Naive thymus-derived CD4-positive, alpha-beta T cell (primary cell): ENCODE measurements at regions of chr12 and their contacts with region 1.

Region 1: GRCh38 chr12:14284184-14284722 is 81.2 kb upstream of the ATF7IP start:
- DNase-seq: no peak
- ATAC-seq: no peak
- H3K4me3 ChIP-seq: no peak overlapping the region
- H3K4me3 Mint-ChIP-seq: no peak overlapping the region
- H3K27ac ChIP-seq: no peak overlapping the region
- H3K27ac Mint-ChIP-seq: no peak overlapping the region
- H3K4me1 ChIP-seq: no peaks in the 10 kb centered on the region
- H3K4me1 Mint-ChIP-seq: peaks cover 0 to 8% (median 0%) of the 10 kb centered on the region in 7 donors
- H3K27me3 ChIP-seq: no peaks in the 10 kb centered on the region
- H3K27me3 Mint-ChIP-seq: no peaks in the 10 kb centered on the region

Region 2: GRCh38 chr12:13187399-13187798 is 1096.9 kb before region 1 on chr12:
- CTCF ChIA-PET with region 1: no interaction called
- POLR2A ChIA-PET with region 1: no interaction called
- intact Hi-C with region 1: no loop called
- DNase-seq: no peak
- ATAC-seq: no peak
- H3K4me3 ChIP-seq: no peak overlapping the region
- H3K4me3 Mint-ChIP-seq: no peak overlapping the region
- H3K27ac ChIP-seq: no peak overlapping the region
- H3K27ac Mint-ChIP-seq: peak overlapping the region in 1 of 9 donors; percentile 26
- H3K4me1 ChIP-seq: no peaks in the 10 kb centered on the region
- H3K4me1 Mint-ChIP-seq: peaks cover 0 to 27% (median 0%) of the 10 kb centered on the region in 7 donors
- H3K27me3 ChIP-seq: no peaks in the 10 kb centered on the region
- H3K27me3 Mint-ChIP-seq: peaks cover 0 to 39% (median 7%) of the 10 kb centered on the region in 5 donors

Region 3: DNA sequence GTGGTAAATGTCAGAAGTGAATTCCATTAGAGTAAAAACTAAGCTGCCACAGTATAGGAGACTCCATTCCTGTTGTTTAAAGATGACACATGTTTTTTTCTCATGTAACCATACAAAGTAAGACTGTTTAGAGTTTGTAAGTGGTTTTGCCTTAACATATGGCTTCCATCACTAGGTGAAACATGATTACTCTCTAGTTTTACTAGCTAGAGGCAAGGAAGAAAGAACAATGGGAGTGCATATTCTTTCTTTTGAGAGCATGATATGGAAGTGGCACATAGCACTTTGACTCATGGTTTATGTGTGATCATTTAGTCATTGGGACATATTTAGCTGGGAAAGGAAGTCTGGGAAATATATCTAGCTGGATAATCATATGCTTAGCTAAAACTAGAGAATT is 89.0 kb after region 1 on chr12:
- CTCF ChIA-PET with region 1: no interaction called
- POLR2A ChIA-PET with region 1: interaction called, 10 read pairs
- intact Hi-C with region 1: no loop called
- DNase-seq: no peak
- ATAC-seq: peak; percentile 27
- H3K4me3 ChIP-seq: no peak overlapping the region
- H3K4me3 Mint-ChIP-seq: peak overlapping the region in 9 of 10 donors; percentile 10 to 81 (median 58)
- H3K27ac ChIP-seq: peak overlapping the region; percentile 31
- H3K27ac Mint-ChIP-seq: peak overlapping the region; percentile 21 to 88 (median 74)
- H3K4me1 ChIP-seq: peaks cover 35 to 41% of the 10 kb centered on the region in 2 donors
- H3K4me1 Mint-ChIP-seq: peaks cover 30 to 78% (median 71%) of the 10 kb centered on the region in 7 donors
- H3K27me3 ChIP-seq: no peaks in the 10 kb centered on the region
- H3K27me3 Mint-ChIP-seq: no peaks in the 10 kb centered on the region